Posterior vena cava (tissue), 2 donors: ENCODE measurements at regions of chr20 and their contacts with region 1.

Region 1: GRCh38 chr20:47304287-47304686 is 52.2 kb downstream of the ZMYND8 start:
- DNase-seq: no peak

Region 2: DNA sequence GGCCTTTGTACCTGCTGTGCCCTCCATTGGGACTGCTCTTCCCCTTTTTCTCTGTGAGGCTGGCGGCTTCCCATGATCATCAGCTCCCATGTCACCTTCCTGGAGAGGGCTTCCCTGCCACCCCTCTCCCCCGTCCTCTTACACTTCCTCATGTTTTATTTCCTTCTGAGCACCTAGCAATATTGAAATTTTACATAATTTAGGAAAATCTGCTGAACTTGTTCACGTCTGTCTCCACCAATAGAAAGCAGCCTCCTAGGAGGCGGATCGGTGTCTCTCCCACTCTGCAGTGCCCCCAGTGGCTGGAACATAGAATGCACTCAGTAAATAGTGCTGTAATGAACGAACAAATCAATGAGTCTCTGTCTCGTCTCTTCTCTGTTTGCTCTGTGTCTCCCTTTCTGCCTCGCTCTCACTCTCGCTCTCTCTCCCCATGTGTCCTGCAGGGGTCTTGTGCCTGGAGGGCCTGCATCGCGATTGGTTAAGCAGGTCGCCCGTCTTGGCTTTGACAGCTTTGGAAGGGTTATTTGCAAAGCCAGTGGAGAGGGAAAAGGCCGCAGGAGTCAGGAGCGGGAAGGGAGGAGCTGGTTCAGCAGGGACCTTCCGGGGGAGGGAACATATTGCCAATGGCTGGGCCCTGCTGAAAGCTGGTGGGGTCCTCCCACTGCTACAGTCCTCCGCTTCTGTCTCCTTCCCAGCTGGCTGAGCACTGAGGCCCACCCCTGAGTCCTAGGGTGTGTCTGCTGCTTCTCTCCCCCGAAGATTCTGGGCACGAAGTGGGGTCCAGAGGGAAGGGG is 741.7 kb before region 1 on chr20:
- intact Hi-C with region 1: loop called in 1 of 2 experiments (anchors 5 kb)
- DNase-seq: peak; percentile 84

Region 3: DNA sequence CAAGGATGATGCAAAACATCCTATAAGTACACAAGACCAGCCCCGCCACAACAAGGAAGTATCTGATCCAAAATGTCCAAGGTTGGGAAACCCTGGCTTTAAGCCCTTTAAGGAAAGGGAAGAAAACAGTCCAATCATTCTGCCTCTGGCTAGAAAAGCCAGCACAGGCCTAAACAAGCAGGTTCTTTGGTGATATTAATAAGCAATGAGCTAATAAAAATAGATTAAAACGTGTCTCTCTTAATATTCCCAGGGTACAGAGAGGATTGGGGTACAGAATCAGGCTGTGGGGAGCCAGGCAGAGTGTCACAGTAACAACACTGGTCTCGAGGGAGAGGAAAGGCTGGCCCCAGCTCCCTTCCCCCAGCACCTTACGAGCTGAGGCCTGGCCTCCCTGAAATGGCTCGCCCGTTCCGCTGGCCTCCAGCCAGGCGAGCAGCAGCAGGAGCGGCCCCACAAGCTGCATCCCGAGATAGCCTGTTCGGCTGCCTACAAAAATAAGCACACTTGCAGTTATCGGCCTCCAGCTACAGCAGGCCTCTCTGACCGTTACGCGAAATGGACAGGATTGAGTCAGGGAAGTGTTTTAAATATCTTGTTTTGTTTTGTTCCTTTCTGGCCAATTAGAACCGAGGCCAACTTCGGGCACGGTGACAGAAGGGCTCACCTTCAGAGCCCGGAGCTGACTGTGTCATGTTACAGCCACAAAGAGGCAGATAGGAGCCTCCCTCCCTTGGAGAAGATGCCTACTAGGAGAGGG is 56.2 kb after region 1 on chr20:
- intact Hi-C with region 1: no loop called
- DNase-seq: peak; percentile 91